ENCODE measurements at regions of chr17 and their contacts with region 1.

Region 1: DNA sequence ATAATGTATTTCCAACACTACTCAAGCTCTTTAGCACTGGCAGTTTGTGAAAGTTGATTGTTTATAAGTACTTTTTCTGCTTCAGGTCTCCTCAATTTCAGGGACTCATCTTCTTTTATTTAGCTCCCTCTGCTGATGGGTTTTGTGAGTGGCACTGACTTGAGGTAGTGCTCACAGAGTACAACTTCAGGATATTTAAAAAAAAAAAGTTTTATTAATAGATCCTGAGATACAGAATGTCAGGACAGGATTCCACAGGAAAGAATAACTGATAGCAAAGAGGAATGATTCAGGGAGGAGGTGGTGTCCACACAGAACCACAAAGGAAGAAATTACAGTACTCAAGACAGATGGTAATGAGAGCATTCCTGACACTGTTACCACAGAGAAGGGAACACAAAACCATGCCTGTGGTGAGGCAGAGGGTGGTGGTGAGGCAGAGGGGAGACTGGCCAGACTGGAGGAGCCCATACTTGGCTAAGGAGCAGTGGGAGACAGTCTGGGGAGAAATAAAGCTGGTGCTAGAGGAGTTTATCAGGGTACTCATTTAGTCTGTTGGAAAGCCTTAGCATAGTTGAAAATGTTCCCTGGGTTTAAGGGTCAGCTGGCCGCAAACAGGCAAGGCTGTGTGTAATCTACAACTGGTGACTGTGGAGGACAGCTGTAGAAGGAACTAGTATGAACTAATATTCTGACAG is 63.7 kb downstream of the SPAG9 start:
- DNase-seq: peak; percentile 71
- H3K4me3 ChIP-seq: no peak overlapping the region
- H3K27ac ChIP-seq: no peak overlapping the region
- H3K4me1 ChIP-seq: peaks cover 23% of the 10 kb centered on the region
- CTCF ChIP-seq: peak; percentile 92

Region 2: GRCh38 chr17:50785946-50786570 is 270.9 kb before region 1 on chr17:
- CTCF ChIA-PET with region 1: no interaction called
- POLR2A ChIA-PET with region 1: no interaction called
- intact Hi-C with region 1: no loop called
- DNase-seq: no peak
- H3K4me3 ChIP-seq: no peak overlapping the region
- H3K27ac ChIP-seq: no peak overlapping the region
- H3K4me1 ChIP-seq: no peaks in the 10 kb centered on the region
- CTCF ChIP-seq: no peak

Region 3: GRCh38 chr17:51000835-51001638 is 55.9 kb before region 1 on chr17:
- CTCF ChIA-PET with region 1: interaction called, 3 read pairs
- POLR2A ChIA-PET with region 1: interaction called, 4 read pairs
- intact Hi-C with region 1: loop called (anchors 1 kb)
- DNase-seq: peak; percentile 80
- H3K4me3 ChIP-seq: no peak overlapping the region
- H3K27ac ChIP-seq: no peak overlapping the region
- H3K4me1 ChIP-seq: no peaks in the 10 kb centered on the region
- CTCF ChIP-seq: peak; percentile 91